ENCODE measurements at regions of chr3 and their contacts with region 1.

Region 1: GRCh38 chr3:61864886-61865285 is 303.5 kb downstream of the PTPRG start:
- DNase-seq: no peak
- ATAC-seq: no peak

Region 2: GRCh38 chr3:61908382-61908781 is 43.5 kb after region 1 on chr3:
- intact Hi-C with region 1: loop called (anchors 5 kb)
- DNase-seq: no peak
- ATAC-seq: no peak

Measured in Right ventricle myocardium inferior (tissue), 1 donor.